CD4-positive, alpha-beta memory T cell (primary cell): ENCODE measurements at regions of chrX and their contacts with region 1.

Region 1: GRCh38 chrX:24054182-24055042 is at the start of gene EIF2S3:
- DNase-seq: peak; percentile 90 to 96 (median 94)
- H3K4me3 ChIP-seq: peak within 1 kb of the TSS; percentile 76 to 79
- H3K4me3 Mint-ChIP-seq: peak within 1 kb of the TSS in 3 of 8 donors; percentile 97 to 100 (median 98)
- H3K27ac ChIP-seq: no peak within 1 kb of the TSS
- H3K27ac Mint-ChIP-seq: peak within 1 kb of the TSS in 1 of 7 donors; percentile 99
- H3K4me1 ChIP-seq: peaks cover 5% of the 10 kb centered on the region
- H3K4me1 Mint-ChIP-seq: peaks cover 0 to 4% (median 1%) of the 10 kb centered on the region in 4 donors
- H3K27me3 ChIP-seq: no peaks in the 10 kb centered on the region
- H3K27me3 Mint-ChIP-seq: no peaks in the 10 kb centered on the region
- total RNA-seq, gene EIF2S3: 218 to 221 TPM

Region 2: DNA sequence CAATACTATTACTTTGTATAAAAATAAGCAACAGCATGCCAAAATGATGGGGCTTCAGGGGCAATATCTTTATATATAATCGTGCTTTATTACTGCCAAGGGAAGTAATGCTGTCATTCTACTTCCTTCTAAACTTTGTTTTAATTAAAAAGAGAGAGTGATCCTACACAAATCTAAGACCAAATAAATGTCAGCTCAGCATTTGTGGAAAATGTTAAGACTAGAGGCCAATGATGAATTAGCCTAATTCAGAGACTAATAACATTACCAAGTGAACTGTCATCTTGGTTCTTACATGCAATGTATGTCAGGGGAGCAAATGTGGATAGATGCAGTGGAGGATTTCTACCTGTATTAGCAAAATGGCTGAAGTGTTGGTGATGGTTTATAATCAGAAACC is 886.1 kb before region 1 on chrX:
- CTCF ChIA-PET with region 1: no interaction called
- POLR2A ChIA-PET with region 1: no interaction called
- intact Hi-C with region 1: no loop called
- DNase-seq: no peak
- H3K4me3 ChIP-seq: no peak overlapping the region
- H3K4me3 Mint-ChIP-seq: no peak overlapping the region
- H3K27ac ChIP-seq: no peak overlapping the region
- H3K27ac Mint-ChIP-seq: no peak overlapping the region
- H3K4me1 ChIP-seq: no peaks in the 10 kb centered on the region
- H3K4me1 Mint-ChIP-seq: no peaks in the 10 kb centered on the region
- H3K27me3 ChIP-seq: no peaks in the 10 kb centered on the region
- H3K27me3 Mint-ChIP-seq: no peaks in the 10 kb centered on the region

Region 3: DNA sequence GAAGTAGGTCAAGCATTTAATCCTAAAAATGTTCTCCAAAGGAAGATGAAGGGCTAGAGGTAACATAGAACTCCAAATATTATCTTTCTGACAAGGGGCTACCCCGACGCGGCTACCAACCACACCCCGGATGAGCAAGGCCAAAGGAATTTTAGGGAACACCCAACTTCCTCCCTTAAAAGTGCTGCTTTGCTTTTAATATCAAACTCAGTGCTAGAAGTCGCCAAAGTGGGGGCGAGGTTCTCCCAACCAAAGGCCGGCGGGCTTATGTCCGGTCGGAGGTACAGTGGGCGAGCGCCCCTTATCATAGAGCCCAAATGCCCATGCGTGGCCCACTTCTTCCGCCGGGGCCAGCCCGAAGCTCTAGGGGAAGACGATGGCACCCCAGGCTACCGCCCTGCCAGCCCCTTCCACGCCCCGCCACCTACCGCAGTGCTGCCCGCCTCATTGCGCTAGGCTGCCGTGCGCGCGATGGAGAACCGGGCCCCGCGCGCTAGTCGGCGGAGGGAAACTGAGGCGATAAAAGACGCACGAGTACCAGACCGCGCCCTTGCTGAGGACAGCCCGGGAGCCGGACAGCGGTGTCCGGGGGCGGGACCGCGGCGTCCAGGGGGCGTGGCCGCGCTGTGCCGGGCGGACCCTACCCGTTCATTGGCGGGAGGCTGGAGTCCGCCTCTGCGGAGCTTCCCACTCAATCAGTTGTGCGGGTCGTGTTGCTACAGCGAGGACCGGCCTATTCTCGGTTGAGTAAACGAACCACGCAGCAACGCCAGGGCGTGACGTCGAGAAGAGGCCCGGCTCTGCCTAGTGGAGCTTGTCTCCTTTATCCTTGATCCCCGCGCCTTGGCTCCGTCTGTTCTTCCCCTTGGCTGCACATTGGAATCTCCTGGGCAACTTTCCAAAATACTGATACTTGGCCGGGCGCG is 311.5 kb before region 1 on chrX and contains the start of gene ACOT9:
- CTCF ChIA-PET with region 1: interaction called, 3 read pairs
- POLR2A ChIA-PET with region 1: interaction called, 10 read pairs
- intact Hi-C with region 1: no loop called
- DNase-seq: peak; percentile 69 to 80 (median 76)
- H3K4me3 ChIP-seq: peak within 1 kb of the TSS; percentile 45 to 77
- H3K4me3 Mint-ChIP-seq: peak within 1 kb of the TSS; percentile 87 to 94 (median 90)
- H3K27ac ChIP-seq: peak within 1 kb of the TSS; percentile 58
- H3K27ac Mint-ChIP-seq: peak within 1 kb of the TSS; percentile 64 to 96 (median 91)
- H3K4me1 ChIP-seq: peaks cover 35% of the 10 kb centered on the region
- H3K4me1 Mint-ChIP-seq: peaks cover 11 to 42% (median 28%) of the 10 kb centered on the region in 4 donors
- H3K27me3 ChIP-seq: no peaks in the 10 kb centered on the region
- H3K27me3 Mint-ChIP-seq: no peaks in the 10 kb centered on the region
- total RNA-seq, gene ACOT9: 21.2 to 25.2 TPM

Region 4: GRCh38 chrX:23782863-23783568 is 271.4 kb before region 1 on chrX and contains the start of gene SAT1:
- CTCF ChIA-PET with region 1: interaction called, 8 read pairs
- POLR2A ChIA-PET with region 1: interaction called, 43 read pairs
- intact Hi-C with region 1: loop called (anchors 1 kb)
- DNase-seq: peak; percentile 90 to 94 (median 93)
- H3K4me3 ChIP-seq: peak within 1 kb of the TSS; percentile 78 to 80
- H3K4me3 Mint-ChIP-seq: peak within 1 kb of the TSS; percentile 88 to 98 (median 96)
- H3K27ac ChIP-seq: peak within 1 kb of the TSS; percentile 88
- H3K27ac Mint-ChIP-seq: peak within 1 kb of the TSS; percentile 96 to 99 (median 98)
- H3K4me1 ChIP-seq: peaks cover 34% of the 10 kb centered on the region
- H3K4me1 Mint-ChIP-seq: peaks cover 13 to 45% (median 29%) of the 10 kb centered on the region in 4 donors
- H3K27me3 ChIP-seq: no peaks in the 10 kb centered on the region
- H3K27me3 Mint-ChIP-seq: no peaks in the 10 kb centered on the region
- total RNA-seq, gene SAT1: 139 to 145 TPM

Region 5: GRCh38 chrX:23907498-23908218 is 146.8 kb before region 1 on chrX and contains the starts of genes APOO and CXorf58:
- CTCF ChIA-PET with region 1: interaction called, 53 read pairs
- POLR2A ChIA-PET with region 1: interaction called, 44 read pairs
- intact Hi-C with region 1: loop called (anchors 1 kb)
- DNase-seq: peak; percentile 91 to 95 (median 92)
- H3K4me3 ChIP-seq: peak within 1 kb of the TSS in 1 of 2 donors; percentile 68
- H3K4me3 Mint-ChIP-seq: peak within 1 kb of the TSS; percentile 78 to 91 (median 84)
- H3K27ac ChIP-seq: peak within 1 kb of the TSS; percentile 78
- H3K27ac Mint-ChIP-seq: peak within 1 kb of the TSS; percentile 88 to 96 (median 91)
- H3K4me1 ChIP-seq: peaks cover 28% of the 10 kb centered on the region
- H3K4me1 Mint-ChIP-seq: peaks cover 7 to 22% (median 13%) of the 10 kb centered on the region in 4 donors
- H3K27me3 ChIP-seq: no peaks in the 10 kb centered on the region
- H3K27me3 Mint-ChIP-seq: no peaks in the 10 kb centered on the region
- total RNA-seq, gene APOO: 5.1 to 7.9 TPM
- total RNA-seq, gene CXorf58: not detected

Region 6: DNA sequence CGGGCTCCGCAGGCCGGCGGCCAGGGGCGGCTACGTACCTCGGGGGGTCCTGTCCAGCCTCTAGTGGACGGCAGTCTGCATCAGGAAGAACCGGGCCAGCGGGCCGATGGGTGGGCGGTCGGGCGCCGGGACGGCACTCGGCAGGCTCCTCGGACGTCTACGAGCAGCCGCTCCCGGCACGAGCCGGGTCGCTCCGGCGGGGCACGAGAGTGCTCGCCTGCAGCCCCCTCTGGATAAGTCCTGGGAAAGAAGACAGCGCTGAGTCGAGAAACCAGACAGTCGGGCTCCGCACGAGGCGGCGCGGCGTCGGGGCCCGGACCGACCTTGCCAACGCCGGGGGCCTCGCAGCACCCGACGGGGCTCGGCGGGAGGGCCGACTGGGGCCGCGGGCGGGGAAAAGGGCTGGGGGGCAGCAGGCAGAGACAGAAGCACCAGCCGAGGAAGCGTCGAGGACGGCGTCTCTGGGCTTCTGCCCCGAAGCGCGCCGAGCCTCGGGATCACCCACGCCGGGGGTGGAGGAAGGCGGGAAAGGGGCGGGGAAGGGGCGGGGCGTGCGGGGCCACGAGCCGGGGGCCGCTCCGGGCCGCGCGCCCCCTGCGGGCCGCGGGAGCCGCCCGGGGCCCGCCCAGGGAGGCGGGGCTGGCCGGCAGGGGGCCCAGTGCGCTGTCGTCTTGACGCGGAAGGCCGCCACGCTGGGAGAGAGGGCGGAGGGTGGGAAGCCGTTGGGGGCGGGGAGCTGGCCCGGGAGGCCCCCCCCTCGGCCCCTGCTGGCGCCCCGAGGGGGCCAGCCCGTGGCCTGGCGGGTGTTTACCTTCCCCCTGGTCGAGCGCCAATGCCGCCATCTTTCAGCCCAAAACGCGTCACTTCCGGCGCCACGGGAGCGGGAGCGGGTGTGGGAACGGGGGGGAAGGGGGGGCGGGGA is 29.3 kb before region 1 on chrX:
- CTCF ChIA-PET with region 1: interaction called, 48 read pairs
- POLR2A ChIA-PET with region 1: interaction called, 76 read pairs
- intact Hi-C with region 1: loop called (anchors 1 kb)
- DNase-seq: peak; percentile 77 to 82 (median 80)
- H3K4me3 ChIP-seq: peak overlapping the region; percentile 61 to 62
- H3K4me3 Mint-ChIP-seq: peak overlapping the region; percentile 62 to 94 (median 88)
- H3K27ac ChIP-seq: peak overlapping the region; percentile 75
- H3K27ac Mint-ChIP-seq: peak overlapping the region in 5 of 7 donors; percentile 59 to 92 (median 75)
- H3K4me1 ChIP-seq: peaks cover 29% of the 10 kb centered on the region
- H3K4me1 Mint-ChIP-seq: peaks cover 14 to 29% (median 22%) of the 10 kb centered on the region in 4 donors
- H3K27me3 ChIP-seq: no peaks in the 10 kb centered on the region
- H3K27me3 Mint-ChIP-seq: no peaks in the 10 kb centered on the region

Region 7: GRCh38 chrX:24479924-24480323 is 425.5 kb after region 1 on chrX:
- CTCF ChIA-PET with region 1: no interaction called
- POLR2A ChIA-PET with region 1: interaction called, 4 read pairs
- intact Hi-C with region 1: loop called (anchors 1 kb)
- DNase-seq: peak; percentile 77 to 94 (median 89)
- H3K4me3 ChIP-seq: peak overlapping the region in 1 of 2 donors; percentile 44
- H3K4me3 Mint-ChIP-seq: peak overlapping the region; percentile 53 to 86 (median 74)
- H3K27ac ChIP-seq: peak overlapping the region; percentile 82
- H3K27ac Mint-ChIP-seq: peak overlapping the region; percentile 86 to 97 (median 92)
- H3K4me1 ChIP-seq: peaks cover 83% of the 10 kb centered on the region
- H3K4me1 Mint-ChIP-seq: peaks cover 42 to 89% (median 64%) of the 10 kb centered on the region in 4 donors
- H3K27me3 ChIP-seq: no peaks in the 10 kb centered on the region
- H3K27me3 Mint-ChIP-seq: no peaks in the 10 kb centered on the region

Region 8: DNA sequence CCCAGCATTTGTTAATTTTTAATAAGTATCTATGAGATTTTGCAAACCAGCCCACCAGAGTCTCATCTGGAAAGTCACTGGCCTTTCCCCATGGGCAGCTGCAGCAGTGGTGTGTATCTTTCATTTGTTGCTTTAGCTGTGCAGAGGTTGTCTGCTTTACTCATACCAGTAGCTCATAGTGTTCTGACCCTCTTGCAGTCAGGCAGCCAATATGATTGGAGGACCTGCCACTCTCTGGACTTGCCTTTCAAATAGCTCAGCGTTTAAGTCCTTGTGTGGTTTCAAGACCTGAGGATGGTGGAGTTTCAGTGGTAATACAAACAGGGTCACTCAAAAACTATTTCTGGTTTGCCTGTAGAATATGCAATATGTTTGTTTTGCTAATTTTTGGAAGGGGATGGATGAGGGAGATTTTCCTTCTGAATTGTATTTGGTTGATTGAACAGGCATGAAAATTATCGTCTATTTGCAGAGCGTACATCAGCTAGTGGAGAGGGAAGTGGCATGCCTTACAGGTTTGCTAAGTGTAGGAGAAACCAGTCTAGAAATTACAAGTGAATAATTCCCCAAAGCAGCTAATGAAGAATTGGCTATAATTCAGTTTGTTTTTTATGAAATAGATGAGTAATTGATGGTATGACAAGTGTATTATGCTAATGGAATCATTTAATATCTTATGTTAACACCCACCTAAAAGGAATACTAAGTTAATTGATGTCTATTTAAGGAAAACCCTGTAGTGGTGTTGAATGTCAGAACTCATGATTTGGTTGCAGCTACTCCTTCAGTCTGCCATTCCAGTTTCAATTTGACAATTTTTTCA is 648.2 kb after region 1 on chrX:
- CTCF ChIA-PET with region 1: no interaction called
- POLR2A ChIA-PET with region 1: no interaction called
- intact Hi-C with region 1: no loop called
- DNase-seq: no peak
- H3K4me3 ChIP-seq: no peak overlapping the region
- H3K4me3 Mint-ChIP-seq: no peak overlapping the region
- H3K27ac ChIP-seq: no peak overlapping the region
- H3K27ac Mint-ChIP-seq: no peak overlapping the region
- H3K4me1 ChIP-seq: no peaks in the 10 kb centered on the region
- H3K4me1 Mint-ChIP-seq: peaks cover 0 to 1% (median under 1%) of the 10 kb centered on the region in 4 donors
- H3K27me3 ChIP-seq: no peaks in the 10 kb centered on the region
- H3K27me3 Mint-ChIP-seq: no peaks in the 10 kb centered on the region